ENCODE measurements at regions of chr14 and their contacts with region 1.

Region 1: DNA sequence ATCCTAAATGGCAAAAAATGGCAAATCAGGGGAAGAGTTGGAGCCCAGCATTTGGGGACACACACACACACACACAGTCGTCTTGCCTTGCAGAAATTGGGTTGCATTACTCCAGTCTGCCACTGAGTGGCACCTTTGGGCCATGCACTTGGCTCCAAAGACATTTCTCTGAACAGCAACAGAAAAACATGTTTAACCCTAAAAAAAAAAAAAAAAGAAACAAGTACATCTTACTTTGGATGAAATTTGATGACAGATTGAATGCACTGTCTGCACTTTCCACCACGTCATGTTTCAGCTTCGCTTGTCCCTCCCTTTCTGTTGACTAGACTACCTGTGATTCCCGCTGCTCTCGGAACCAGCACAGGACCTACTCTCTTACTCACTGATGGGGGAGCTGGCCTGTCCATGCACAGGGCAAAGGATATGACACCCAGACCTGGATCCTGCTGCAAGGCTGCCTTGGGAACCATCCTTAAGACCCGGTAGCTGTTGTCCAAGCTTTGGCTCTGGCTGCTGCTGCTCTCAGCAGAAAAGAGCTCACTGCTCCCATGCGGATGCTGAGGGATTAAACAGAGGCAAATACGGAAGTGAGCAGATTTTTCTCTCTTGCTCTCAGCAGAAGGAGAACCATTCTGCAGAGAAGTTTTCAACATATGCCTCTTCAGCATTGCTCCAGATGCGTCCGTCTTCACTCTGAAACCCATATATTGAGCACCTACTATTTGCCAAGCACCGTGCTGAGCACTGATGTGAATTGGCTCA is 376.8 kb downstream of the DPF3 start:
- DNase-seq: peak; percentile 83
- ATAC-seq: no peak
- H3K4me3 Mint-ChIP-seq: no peak overlapping the region
- H3K27ac Mint-ChIP-seq: no peak overlapping the region
- H3K4me1 Mint-ChIP-seq: peaks cover 54% of the 10 kb centered on the region
- H3K27me3 Mint-ChIP-seq: no peaks in the 10 kb centered on the region

Region 2: DNA sequence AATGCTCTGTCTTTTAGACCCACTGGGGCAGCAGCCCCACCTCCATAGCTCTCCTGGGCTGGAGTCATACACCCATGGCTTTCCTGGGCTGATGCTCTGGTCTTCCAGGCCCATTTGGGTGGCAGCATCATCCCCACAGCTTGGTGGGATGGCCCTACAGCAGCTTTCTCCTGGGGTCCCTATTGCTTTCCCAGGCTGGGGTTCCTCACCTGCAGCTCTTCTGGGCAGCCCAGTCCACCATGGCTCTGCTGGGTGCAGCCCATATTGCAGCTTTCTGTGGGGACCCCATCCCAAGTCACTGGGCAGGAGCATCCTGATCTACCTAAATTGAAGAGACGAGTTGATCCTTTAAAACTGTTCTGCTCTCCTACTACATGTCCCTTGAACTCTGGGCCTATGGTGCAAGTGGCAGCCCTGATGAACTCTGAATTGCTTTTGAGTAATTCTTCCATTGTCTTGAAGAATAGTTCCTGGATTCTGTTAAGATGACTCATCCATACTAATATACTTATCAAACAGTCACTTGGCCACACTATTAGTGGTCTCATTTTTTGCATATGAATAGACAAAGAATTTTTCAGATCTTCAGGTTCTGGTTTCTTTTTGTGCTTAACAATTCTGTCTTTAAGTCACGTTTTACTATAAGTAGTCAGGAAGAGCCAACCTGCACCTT is 13.3 kb before region 1 on chr14:
- CTCF ChIA-PET with region 1: interaction called, 10 read pairs
- POLR2A ChIA-PET with region 1: no interaction called
- intact Hi-C with region 1: no loop called
- DNase-seq: no peak
- ATAC-seq: no peak
- H3K4me3 Mint-ChIP-seq: no peak overlapping the region
- H3K27ac Mint-ChIP-seq: no peak overlapping the region
- H3K4me1 Mint-ChIP-seq: no peaks in the 10 kb centered on the region
- H3K27me3 Mint-ChIP-seq: no peaks in the 10 kb centered on the region

Region 3: DNA sequence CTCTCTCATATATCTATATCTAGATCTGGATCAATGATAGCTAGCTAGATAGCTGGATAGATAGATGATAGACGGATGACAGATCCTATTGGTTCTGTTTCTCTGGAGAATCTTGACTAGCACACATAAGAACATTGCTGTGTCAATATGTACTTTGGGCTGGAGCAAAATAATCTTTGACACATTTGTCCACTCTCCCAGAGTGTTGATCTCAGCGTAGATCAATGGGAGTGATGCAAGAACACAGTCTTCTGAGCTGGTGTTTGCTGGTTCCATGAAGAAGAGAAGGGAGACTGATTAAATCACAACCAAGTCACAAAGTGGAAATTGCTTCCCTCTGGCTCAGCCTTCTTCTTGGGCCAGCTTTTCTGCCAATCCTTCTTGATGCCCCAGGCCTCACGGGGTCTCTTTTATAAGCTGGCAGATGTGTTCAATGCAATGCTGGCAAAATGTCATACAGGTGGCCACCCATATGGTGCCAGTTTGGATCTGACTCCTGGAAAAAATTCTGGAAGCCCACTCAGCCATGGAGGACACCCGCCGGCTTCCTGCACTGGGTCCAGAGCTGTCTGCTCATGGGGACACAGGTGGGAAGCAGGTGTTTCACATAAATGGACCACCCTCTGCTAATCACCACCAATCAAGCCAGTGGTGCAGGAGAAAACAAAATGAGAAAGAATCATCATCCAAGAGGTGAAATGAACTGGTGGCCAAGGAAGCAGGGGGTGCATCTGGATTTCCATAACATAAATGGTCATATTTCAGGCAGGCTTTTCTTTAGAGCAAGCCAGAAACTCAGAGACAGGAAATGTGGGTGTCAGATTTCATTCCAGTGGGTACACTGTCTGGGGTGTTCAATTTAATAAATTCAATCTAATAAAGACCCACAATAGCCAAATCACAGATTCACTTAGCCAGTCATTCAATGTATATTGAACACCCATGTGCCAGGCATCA is 66.5 kb after region 1 on chr14:
- CTCF ChIA-PET with region 1: no interaction called
- POLR2A ChIA-PET with region 1: no interaction called
- intact Hi-C with region 1: loop called in 1 of 2 experiments (anchors 2 kb)
- DNase-seq: no peak
- ATAC-seq: no peak
- H3K4me3 Mint-ChIP-seq: no peak overlapping the region
- H3K27ac Mint-ChIP-seq: no peak overlapping the region
- H3K4me1 Mint-ChIP-seq: peaks cover 2% of the 10 kb centered on the region
- H3K27me3 Mint-ChIP-seq: no peaks in the 10 kb centered on the region

Region 4: GRCh38 chr14:72608391-72609204 is 91.5 kb after region 1 on chr14:
- CTCF ChIA-PET with region 1: no interaction called
- POLR2A ChIA-PET with region 1: no interaction called
- intact Hi-C with region 1: no loop called
- DNase-seq: no peak
- ATAC-seq: no peak
- H3K4me3 Mint-ChIP-seq: no peak overlapping the region
- H3K27ac Mint-ChIP-seq: no peak overlapping the region
- H3K4me1 Mint-ChIP-seq: no peaks in the 10 kb centered on the region
- H3K27me3 Mint-ChIP-seq: no peaks in the 10 kb centered on the region

Region 5: GRCh38 chr14:72665259-72665658 is 148.1 kb after region 1 on chr14:
- CTCF ChIA-PET with region 1: interaction called, 5 read pairs
- POLR2A ChIA-PET with region 1: no interaction called
- intact Hi-C with region 1: loop called in 1 of 2 experiments (anchors 1 kb)
- DNase-seq: no peak
- ATAC-seq: peak; percentile 88
- H3K4me3 Mint-ChIP-seq: no peak overlapping the region
- H3K27ac Mint-ChIP-seq: no peak overlapping the region
- H3K4me1 Mint-ChIP-seq: peaks cover 11% of the 10 kb centered on the region
- H3K27me3 Mint-ChIP-seq: peaks cover 4% of the 10 kb centered on the region

Region 6: GRCh38 chr14:72816287-72816686 is 299.2 kb after region 1 on chr14:
- CTCF ChIA-PET with region 1: no interaction called
- POLR2A ChIA-PET with region 1: no interaction called
- intact Hi-C with region 1: no loop called
- DNase-seq: no peak
- ATAC-seq: no peak
- H3K4me3 Mint-ChIP-seq: no peak overlapping the region
- H3K27ac Mint-ChIP-seq: no peak overlapping the region
- H3K4me1 Mint-ChIP-seq: peaks cover 4% of the 10 kb centered on the region
- H3K27me3 Mint-ChIP-seq: no peaks in the 10 kb centered on the region

Region 7: DNA sequence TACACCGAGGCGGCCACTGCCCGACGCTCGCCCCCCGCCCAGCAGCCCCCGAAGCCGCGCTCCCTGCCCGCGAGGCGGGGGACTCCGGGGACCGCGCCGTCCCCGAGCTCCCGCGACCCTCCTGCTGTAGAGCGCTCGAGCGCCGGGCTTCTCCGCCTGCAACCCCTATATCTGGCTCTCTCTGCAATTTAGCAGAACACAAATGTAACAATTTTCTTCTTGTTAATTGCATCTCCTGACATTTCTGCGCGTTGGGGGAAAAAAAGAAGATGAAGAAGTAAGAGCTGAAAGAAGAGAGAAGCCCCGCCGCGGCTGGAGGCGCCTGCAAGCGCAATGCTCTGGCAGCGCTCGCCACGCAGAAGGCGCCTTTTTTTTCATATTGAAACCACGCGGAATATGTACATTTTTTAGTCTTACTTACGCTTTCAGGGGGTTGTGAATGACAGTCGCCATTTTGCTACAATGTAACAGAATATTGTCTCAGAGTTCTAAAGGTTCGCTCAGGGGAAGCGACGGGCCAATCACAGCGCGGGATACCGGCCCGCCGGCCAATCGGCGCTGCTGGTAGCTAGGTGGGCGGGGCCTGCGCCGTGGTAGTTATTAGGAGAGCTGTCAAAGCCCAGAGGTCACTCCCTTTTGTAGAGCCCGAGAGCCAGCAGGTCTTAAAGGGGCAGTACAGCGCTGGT is 376.7 kb after region 1 on chr14 and contains the start of gene DPF3:
- CTCF ChIA-PET with region 1: interaction called, 9 read pairs
- POLR2A ChIA-PET with region 1: interaction called, 5 read pairs
- intact Hi-C with region 1: loop called in 1 of 2 experiments (anchors 2 kb)
- DNase-seq: peak; percentile 94
- ATAC-seq: peak; percentile 99
- H3K4me3 Mint-ChIP-seq: peak within 1 kb of the TSS; percentile 78
- H3K27ac Mint-ChIP-seq: peak within 1 kb of the TSS; percentile 55
- H3K4me1 Mint-ChIP-seq: peaks cover 17% of the 10 kb centered on the region
- H3K27me3 Mint-ChIP-seq: peaks cover 43% of the 10 kb centered on the region
- total RNA-seq, gene DPF3: 0.25 to 0.39 TPM

Region 8: GRCh38 chr14:72926292-72927028 is 409.3 kb after region 1 on chr14 and contains the start of gene DCAF4:
- CTCF ChIA-PET with region 1: no interaction called
- POLR2A ChIA-PET with region 1: no interaction called
- intact Hi-C with region 1: loop called in 1 of 2 experiments (anchors 1 kb)
- DNase-seq: peak; percentile 96
- ATAC-seq: peak; percentile 99
- H3K4me3 Mint-ChIP-seq: peak within 1 kb of the TSS; percentile 89
- H3K27ac Mint-ChIP-seq: peak within 1 kb of the TSS; percentile 87
- H3K4me1 Mint-ChIP-seq: peaks cover 11% of the 10 kb centered on the region
- H3K27me3 Mint-ChIP-seq: no peaks in the 10 kb centered on the region
- total RNA-seq, gene DCAF4: 16.0 to 21.7 TPM

Region 9: DNA sequence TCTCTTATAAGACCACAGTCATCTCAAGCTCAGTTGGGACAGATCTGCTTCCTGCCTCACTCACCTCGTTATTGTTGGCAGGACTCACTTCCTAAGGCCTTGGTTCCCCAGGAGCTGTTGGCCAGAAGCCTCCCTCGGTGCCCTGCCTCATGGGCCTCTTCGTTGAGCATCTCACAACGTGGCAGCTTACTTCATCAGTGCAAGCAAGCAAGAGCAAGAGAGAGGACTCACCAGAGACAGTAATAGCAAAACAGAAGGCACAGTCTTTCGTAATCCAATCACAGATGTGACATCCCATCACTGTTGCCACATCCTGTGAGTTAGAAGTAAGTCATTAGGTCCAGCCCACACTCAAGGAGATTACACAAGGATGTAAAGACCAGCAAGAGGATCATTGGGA is 946.3 kb after region 1 on chr14:
- CTCF ChIA-PET with region 1: no interaction called
- POLR2A ChIA-PET with region 1: no interaction called
- intact Hi-C with region 1: loop called in 1 of 2 experiments (anchors 5 kb)
- DNase-seq: peak; percentile 73
- ATAC-seq: peak; percentile 56
- H3K4me3 Mint-ChIP-seq: peak overlapping the region; percentile 53
- H3K27ac Mint-ChIP-seq: peak overlapping the region; percentile 94
- H3K4me1 Mint-ChIP-seq: peaks cover 63% of the 10 kb centered on the region
- H3K27me3 Mint-ChIP-seq: no peaks in the 10 kb centered on the region